ENCODE measurements at regions of chr6 and their contacts with region 1.

Region 1: GRCh38 chr6:149499066-149499465 is 14.3 kb upstream of the ZC3H12D start:
- DNase-seq: no peak
- ATAC-seq: no peak
- H3K4me3 ChIP-seq: no peak overlapping the region
- H3K4me3 Mint-ChIP-seq: no peak overlapping the region
- H3K27ac ChIP-seq: peak overlapping the region; percentile 17
- H3K27ac Mint-ChIP-seq: peak overlapping the region; percentile 63 to 87
- H3K4me1 ChIP-seq: peaks cover 15 to 31% of the 10 kb centered on the region in 2 experiments
- H3K4me1 Mint-ChIP-seq: peaks cover 56 to 73% (median 73%) of the 10 kb centered on the region in 3 donors
- H3K27me3 ChIP-seq: no peaks in the 10 kb centered on the region
- H3K27me3 Mint-ChIP-seq: no peaks in the 10 kb centered on the region

Region 2: GRCh38 chr6:148263010-148263409 is 1236.1 kb before region 1 on chr6:
- CTCF ChIA-PET with region 1: no interaction called
- POLR2A ChIA-PET with region 1: no interaction called
- DNase-seq: no peak
- ATAC-seq: no peak
- H3K4me3 ChIP-seq: no peak overlapping the region
- H3K4me3 Mint-ChIP-seq: no peak overlapping the region
- H3K27ac ChIP-seq: no peak overlapping the region
- H3K27ac Mint-ChIP-seq: no peak overlapping the region
- H3K4me1 ChIP-seq: no peaks in the 10 kb centered on the region
- H3K4me1 Mint-ChIP-seq: no peaks in the 10 kb centered on the region
- H3K27me3 ChIP-seq: no peaks in the 10 kb centered on the region
- H3K27me3 Mint-ChIP-seq: peaks cover 8 to 25% of the 10 kb centered on the region in 2 donors

Region 3: GRCh38 chr6:149082286-149082707 is 416.8 kb before region 1 on chr6:
- CTCF ChIA-PET with region 1: no interaction called
- POLR2A ChIA-PET with region 1: interaction called in 1 of 2 experiments, 12 read pairs
- DNase-seq: peak; percentile 58 to 91 (median 80)
- ATAC-seq: peak; percentile 85 to 96 (median 92)
- H3K4me3 ChIP-seq: no peak overlapping the region
- H3K4me3 Mint-ChIP-seq: peak overlapping the region in 1 of 3 donors; percentile 13
- H3K27ac ChIP-seq: no peak overlapping the region
- H3K27ac Mint-ChIP-seq: peak overlapping the region in 1 of 2 donors; percentile 71
- H3K4me1 ChIP-seq: peaks cover 3 to 8% of the 10 kb centered on the region in 2 experiments
- H3K4me1 Mint-ChIP-seq: peaks cover 39 to 44% (median 43%) of the 10 kb centered on the region in 3 donors
- H3K27me3 ChIP-seq: no peaks in the 10 kb centered on the region
- H3K27me3 Mint-ChIP-seq: no peaks in the 10 kb centered on the region

Region 4: GRCh38 chr6:149463781-149464180 is 35.3 kb before region 1 on chr6:
- CTCF ChIA-PET with region 1: no interaction called
- POLR2A ChIA-PET with region 1: interaction called in 1 of 2 experiments, 13 read pairs
- DNase-seq: no peak
- ATAC-seq: no peak
- H3K4me3 ChIP-seq: no peak overlapping the region
- H3K4me3 Mint-ChIP-seq: peak overlapping the region in 1 of 3 donors; percentile 4
- H3K27ac ChIP-seq: no peak overlapping the region
- H3K27ac Mint-ChIP-seq: no peak overlapping the region
- H3K4me1 ChIP-seq: peaks cover 0 to 28% of the 10 kb centered on the region in 2 experiments
- H3K4me1 Mint-ChIP-seq: peaks cover 15 to 61% (median 40%) of the 10 kb centered on the region in 3 donors
- H3K27me3 ChIP-seq: no peaks in the 10 kb centered on the region
- H3K27me3 Mint-ChIP-seq: no peaks in the 10 kb centered on the region